Activated CD4-positive, alpha-beta T cell treated with anti-CD3 and anti-CD28 coated beads for 36 hours (primary cell): ENCODE measurements at regions of chr9 and their contacts with region 1.

Region 1: GRCh38 chr9:96449845-96450612 is at the start of gene HABP4:
- DNase-seq: peak; percentile 98
- ATAC-seq: peak; percentile 96
- H3K4me3 Mint-ChIP-seq: peak within 1 kb of the TSS; percentile 84
- H3K27ac Mint-ChIP-seq: peak within 1 kb of the TSS; percentile 73
- H3K4me1 Mint-ChIP-seq: peaks cover 24% of the 10 kb centered on the region
- H3K27me3 Mint-ChIP-seq: peaks cover 9% of the 10 kb centered on the region
- total RNA-seq, gene HABP4: 5.8 to 7.3 TPM

Region 2: GRCh38 chr9:96460882-96461281 is 10.9 kb after region 1 on chr9:
- CTCF ChIA-PET with region 1: interaction called, 5 read pairs
- POLR2A ChIA-PET with region 1: interaction called, 14 read pairs
- intact Hi-C with region 1: no loop called
- DNase-seq: no peak
- ATAC-seq: no peak
- H3K4me3 Mint-ChIP-seq: no peak overlapping the region
- H3K27ac Mint-ChIP-seq: no peak overlapping the region
- H3K4me1 Mint-ChIP-seq: peaks cover 8% of the 10 kb centered on the region
- H3K27me3 Mint-ChIP-seq: no peaks in the 10 kb centered on the region

Region 3: GRCh38 chr9:96486368-96487028 is 36.5 kb after region 1 on chr9:
- CTCF ChIA-PET with region 1: interaction called, 3 read pairs
- POLR2A ChIA-PET with region 1: no interaction called
- intact Hi-C with region 1: loop called (anchors 2 to 5 kb)
- DNase-seq: no peak
- ATAC-seq: no peak
- H3K4me3 Mint-ChIP-seq: no peak overlapping the region
- H3K27ac Mint-ChIP-seq: no peak overlapping the region
- H3K4me1 Mint-ChIP-seq: peaks cover 28% of the 10 kb centered on the region
- H3K27me3 Mint-ChIP-seq: no peaks in the 10 kb centered on the region

Region 4: GRCh38 chr9:96514108-96514799 is 64.2 kb after region 1 on chr9:
- CTCF ChIA-PET with region 1: no interaction called
- POLR2A ChIA-PET with region 1: no interaction called
- intact Hi-C with region 1: no loop called
- DNase-seq: no peak
- ATAC-seq: no peak
- H3K4me3 Mint-ChIP-seq: no peak overlapping the region
- H3K27ac Mint-ChIP-seq: no peak overlapping the region
- H3K4me1 Mint-ChIP-seq: peaks cover 2% of the 10 kb centered on the region
- H3K27me3 Mint-ChIP-seq: no peaks in the 10 kb centered on the region

Region 5: GRCh38 chr9:96619491-96620154 is 169.6 kb after region 1 on chr9 and contains the start of gene CDC14B:
- CTCF ChIA-PET with region 1: interaction called, 6 read pairs
- POLR2A ChIA-PET with region 1: no interaction called
- intact Hi-C with region 1: loop called in 1 of 2 experiments (anchors 2 kb)
- DNase-seq: peak; percentile 90
- ATAC-seq: peak; percentile 82
- H3K4me3 Mint-ChIP-seq: peak within 1 kb of the TSS; percentile 66
- H3K27ac Mint-ChIP-seq: peak within 1 kb of the TSS; percentile 55
- H3K4me1 Mint-ChIP-seq: peaks cover 8% of the 10 kb centered on the region
- H3K27me3 Mint-ChIP-seq: peaks cover 39% of the 10 kb centered on the region
- total RNA-seq, gene CDC14B: 1.1 to 1.5 TPM

Region 6: DNA sequence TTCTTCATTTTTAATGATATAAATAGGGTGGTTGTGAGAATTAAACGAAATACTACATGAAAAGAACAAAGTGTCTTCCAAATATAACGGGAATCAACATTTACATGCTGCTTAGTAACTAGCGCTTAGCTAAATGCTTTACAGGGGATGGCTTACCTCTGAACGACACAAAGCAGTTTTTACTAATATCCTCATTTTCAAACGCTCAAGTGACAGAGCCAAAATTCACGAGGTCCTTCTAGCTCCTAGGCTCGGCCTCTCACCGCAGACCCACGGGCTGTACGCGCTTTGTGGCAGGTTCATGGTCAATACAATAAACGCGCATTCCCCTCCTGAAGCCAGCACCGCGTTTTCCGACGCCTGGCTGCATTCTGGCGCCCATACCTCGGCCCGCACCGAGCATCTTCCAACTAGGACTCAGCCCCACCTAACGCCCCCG is 327.4 kb after region 1 on chr9:
- CTCF ChIA-PET with region 1: no interaction called
- POLR2A ChIA-PET with region 1: no interaction called
- intact Hi-C with region 1: loop called in 1 of 2 experiments (anchors 10 kb)
- DNase-seq: no peak
- ATAC-seq: no peak
- H3K4me3 Mint-ChIP-seq: peak overlapping the region; percentile 93
- H3K27ac Mint-ChIP-seq: peak overlapping the region; percentile 95
- H3K4me1 Mint-ChIP-seq: peaks cover 24% of the 10 kb centered on the region
- H3K27me3 Mint-ChIP-seq: no peaks in the 10 kb centered on the region